ENCODE measurements at regions of chr13 and their contacts with region 1.

Region 1: DNA sequence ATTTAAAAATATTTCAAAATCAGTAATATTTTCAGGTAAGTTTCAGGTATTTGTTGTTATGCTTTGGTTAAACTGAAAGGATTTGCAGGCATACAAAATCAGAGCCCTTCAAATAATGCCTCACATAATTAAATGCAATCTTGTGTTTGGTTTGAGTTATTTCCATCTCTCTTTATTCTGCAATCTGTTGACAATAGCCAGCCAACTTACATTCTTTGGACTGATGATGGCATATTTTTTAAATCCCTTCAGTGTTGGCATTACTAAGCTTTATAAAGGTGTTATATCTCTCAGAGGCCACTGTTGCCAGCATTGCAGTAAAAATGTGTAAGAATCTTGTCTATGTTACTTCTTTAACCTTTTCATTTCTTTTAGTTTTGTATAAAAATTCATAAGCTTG is 257.2 kb upstream of the RFC3 start:
- DNase-seq: no peak
- H3K4me3 Mint-ChIP-seq: no peak overlapping the region
- H3K27ac Mint-ChIP-seq: no peak overlapping the region
- H3K4me1 Mint-ChIP-seq: peaks cover 5% of the 10 kb centered on the region
- H3K27me3 Mint-ChIP-seq: no peaks in the 10 kb centered on the region

Region 2: DNA sequence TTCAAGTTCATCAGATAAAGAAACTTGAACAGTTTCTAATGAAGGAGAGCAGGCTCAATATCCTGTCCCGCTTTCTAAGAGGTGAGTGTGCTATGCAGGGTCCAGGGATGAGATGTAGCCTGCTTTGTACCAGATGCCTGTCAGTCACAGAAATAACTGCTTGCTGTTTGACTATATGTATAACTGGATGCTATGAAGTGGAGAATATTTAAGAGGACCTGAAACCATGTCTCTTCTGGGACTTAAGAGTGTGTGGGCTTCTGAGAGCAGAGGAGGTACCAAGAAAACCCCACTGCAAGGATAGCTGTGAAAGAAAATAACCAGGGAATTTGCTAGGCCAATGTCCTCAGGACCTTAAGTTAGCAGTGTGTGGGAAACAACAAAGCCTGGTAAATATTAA is 10.9 kb after region 1 on chr13:
- intact Hi-C with region 1: loop called (anchors 1 kb)
- DNase-seq: no peak
- H3K4me3 Mint-ChIP-seq: no peak overlapping the region
- H3K27ac Mint-ChIP-seq: no peak overlapping the region
- H3K4me1 Mint-ChIP-seq: peaks cover 8% of the 10 kb centered on the region
- H3K27me3 Mint-ChIP-seq: no peaks in the 10 kb centered on the region

Measured in activated CD4-positive, alpha-beta T cell treated with anti-CD3 and anti-CD28 coated beads, Interleukin-2, amount 10 ng/mL, durations not matched to agents 24 days and 14 days (primary cell).